ENCODE measurements at regions of chr2 and their contacts with region 1.

Region 1: DNA sequence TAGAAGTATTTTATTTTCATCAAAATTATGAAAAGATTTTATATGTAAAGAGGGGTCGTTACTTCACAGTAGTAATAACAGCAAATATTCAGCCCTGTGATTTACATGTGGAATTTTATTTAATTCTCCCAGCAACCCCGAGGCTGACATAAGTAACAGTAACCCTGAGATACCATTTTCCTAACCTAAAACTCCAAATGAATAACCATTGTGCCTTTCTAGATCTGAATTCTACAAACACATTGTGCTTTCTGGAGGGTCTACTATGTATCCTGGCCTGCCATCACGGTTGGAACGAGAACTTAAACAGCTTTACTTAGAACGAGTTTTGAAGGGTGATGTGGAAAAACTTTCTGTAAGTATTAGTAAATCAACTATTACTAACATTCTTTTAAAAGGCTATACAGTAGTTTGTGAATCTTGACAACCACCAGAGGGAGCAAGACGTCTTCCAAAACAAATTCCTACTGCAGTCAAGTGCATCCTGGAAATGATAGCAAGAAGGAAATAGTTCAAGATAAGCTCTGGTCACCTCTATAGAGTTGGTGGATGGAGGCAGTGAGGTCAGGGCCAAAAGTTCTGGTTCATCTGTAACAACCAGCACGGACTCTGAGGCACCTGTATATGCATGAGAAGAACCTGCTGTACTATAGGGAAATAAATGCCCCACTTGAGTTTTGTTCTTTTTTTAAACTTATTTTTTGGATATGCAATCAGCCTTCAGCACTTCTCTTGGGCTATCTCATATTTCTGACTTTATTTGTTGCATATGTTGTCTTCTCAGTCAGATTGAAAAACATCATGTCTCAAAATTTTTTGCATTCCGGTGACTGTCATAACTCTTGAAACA is 37.4 kb downstream of the ACTR2 start:
- DNase-seq: peak; percentile 75
- H3K4me3 Mint-ChIP-seq: no peak overlapping the region
- H3K27ac Mint-ChIP-seq: no peak overlapping the region
- H3K4me1 Mint-ChIP-seq: peaks cover 8% of the 10 kb centered on the region
- H3K27me3 Mint-ChIP-seq: no peaks in the 10 kb centered on the region
- CTCF ChIP-seq: peak; percentile 76

Region 2: DNA sequence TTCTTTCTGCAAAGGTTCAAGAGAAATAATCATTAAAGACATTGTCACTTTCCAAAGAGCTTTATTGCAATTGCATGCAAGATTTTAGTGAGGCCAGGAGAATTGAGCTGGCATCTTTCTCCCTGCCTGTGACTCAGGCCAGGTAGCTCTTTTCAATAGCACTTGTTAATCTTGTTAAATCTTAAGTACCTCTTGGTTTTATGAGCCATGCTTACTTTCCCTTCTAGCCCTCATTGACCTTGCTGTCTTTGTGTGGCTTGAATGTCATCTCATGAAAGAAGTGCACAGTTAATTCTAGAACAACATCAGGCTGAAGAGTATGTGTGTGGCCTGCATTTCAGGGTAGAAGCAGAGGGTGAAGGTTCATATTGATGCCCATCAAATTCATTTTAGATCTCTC is 825.9 kb before region 1 on chr2:
- CTCF ChIA-PET with region 1: no interaction called
- POLR2A ChIA-PET with region 1: no interaction called
- intact Hi-C with region 1: no loop called
- DNase-seq: no peak
- H3K4me3 Mint-ChIP-seq: no peak overlapping the region
- H3K27ac Mint-ChIP-seq: no peak overlapping the region
- H3K4me1 Mint-ChIP-seq: peaks cover 6% of the 10 kb centered on the region
- H3K27me3 Mint-ChIP-seq: peaks cover 11% of the 10 kb centered on the region
- CTCF ChIP-seq: no peak

Region 3: GRCh38 chr2:65276609-65277008 is 11.6 kb after region 1 on chr2:
- CTCF ChIA-PET with region 1: interaction called, 13 read pairs
- POLR2A ChIA-PET with region 1: no interaction called
- intact Hi-C with region 1: no loop called
- DNase-seq: no peak
- H3K4me3 Mint-ChIP-seq: no peak overlapping the region
- H3K27ac Mint-ChIP-seq: no peak overlapping the region
- H3K4me1 Mint-ChIP-seq: peaks cover under 1% of the 10 kb centered on the region
- H3K27me3 Mint-ChIP-seq: no peaks in the 10 kb centered on the region
- CTCF ChIP-seq: no peak

Region 4: DNA sequence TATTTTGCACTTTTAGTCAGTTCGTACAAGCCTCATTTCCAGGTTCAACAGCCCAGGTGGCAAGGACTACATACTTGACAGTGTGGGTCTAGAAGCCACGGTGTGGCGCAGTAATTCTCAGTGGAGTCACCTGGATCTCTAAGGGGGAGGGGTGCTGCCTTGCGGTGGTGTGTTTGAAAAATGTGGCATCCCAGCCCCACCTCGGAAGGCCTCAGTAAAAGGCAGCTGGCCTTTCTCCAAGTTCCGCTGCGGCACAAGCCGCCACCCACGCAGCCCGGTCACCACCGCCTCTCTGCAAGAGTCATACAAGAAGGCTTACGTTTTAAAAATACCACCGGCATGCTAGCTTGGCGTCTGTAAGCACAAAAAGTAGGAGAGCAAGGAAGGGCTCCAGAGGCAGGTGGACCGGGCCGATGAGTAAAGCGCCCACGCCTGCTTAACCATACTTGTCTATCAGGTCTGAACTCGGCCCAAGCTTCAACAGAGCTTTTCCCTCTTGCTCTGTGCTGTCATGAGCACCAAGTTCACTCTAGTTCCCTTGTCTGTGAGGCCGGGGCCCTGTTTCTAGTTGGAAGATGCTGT is 117.8 kb after region 1 on chr2:
- CTCF ChIA-PET with region 1: interaction called, 7 read pairs
- POLR2A ChIA-PET with region 1: no interaction called
- intact Hi-C with region 1: loop called (anchors 2 kb)
- DNase-seq: peak; percentile 94
- H3K4me3 Mint-ChIP-seq: peak overlapping the region; percentile 59
- H3K27ac Mint-ChIP-seq: peak overlapping the region; percentile 81
- H3K4me1 Mint-ChIP-seq: peaks cover 60% of the 10 kb centered on the region
- H3K27me3 Mint-ChIP-seq: no peaks in the 10 kb centered on the region
- CTCF ChIP-seq: no peak

Region 5: DNA sequence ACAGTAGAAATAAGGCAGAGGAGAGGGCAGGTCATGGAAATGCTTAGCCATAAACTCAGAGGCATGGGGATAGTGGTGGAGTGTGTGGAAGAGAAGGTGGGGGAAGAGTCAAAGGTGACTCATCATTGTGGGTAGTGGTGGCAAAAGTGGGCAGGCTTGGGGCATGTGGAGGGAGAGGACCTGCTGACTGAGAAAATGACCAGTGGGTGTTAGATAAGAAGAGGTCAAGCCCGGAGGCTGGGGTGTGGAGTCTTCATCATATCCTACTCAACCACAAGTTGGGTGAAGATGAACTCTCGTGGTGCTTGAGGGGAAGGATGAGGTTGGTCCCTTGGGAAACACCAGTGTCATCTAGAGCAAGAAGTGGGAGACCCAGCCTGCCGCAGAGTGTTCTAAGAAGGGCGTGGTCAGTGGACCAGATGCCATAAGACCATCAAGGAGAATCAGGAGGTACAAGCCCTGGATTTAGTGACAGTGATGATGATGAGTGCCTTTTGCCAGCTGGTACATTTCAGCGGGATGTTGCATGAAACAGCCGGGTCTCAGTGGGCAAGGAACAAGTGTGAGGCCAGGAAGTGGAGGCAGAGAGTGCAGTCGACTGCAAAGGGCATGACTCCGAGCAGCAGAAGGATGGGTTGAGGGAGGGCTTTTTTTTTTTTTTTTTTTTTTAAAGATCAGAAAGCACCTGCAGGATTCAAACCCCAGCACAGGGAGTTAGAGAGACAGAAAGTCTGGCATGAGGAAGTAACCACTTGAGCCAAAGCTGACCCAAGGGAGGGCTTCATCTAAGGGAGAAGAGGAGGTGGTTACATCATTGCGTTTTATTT is 289.9 kb after region 1 on chr2:
- CTCF ChIA-PET with region 1: interaction called, 8 read pairs
- POLR2A ChIA-PET with region 1: interaction called, 4 read pairs
- intact Hi-C with region 1: loop called (anchors 1 kb)
- DNase-seq: no peak
- H3K4me3 Mint-ChIP-seq: no peak overlapping the region
- H3K27ac Mint-ChIP-seq: no peak overlapping the region
- H3K4me1 Mint-ChIP-seq: peaks cover 22% of the 10 kb centered on the region
- H3K27me3 Mint-ChIP-seq: no peaks in the 10 kb centered on the region
- CTCF ChIP-seq: no peak